ENCODE measurements at regions of chr15 and their contacts with region 1.

Region 1: DNA sequence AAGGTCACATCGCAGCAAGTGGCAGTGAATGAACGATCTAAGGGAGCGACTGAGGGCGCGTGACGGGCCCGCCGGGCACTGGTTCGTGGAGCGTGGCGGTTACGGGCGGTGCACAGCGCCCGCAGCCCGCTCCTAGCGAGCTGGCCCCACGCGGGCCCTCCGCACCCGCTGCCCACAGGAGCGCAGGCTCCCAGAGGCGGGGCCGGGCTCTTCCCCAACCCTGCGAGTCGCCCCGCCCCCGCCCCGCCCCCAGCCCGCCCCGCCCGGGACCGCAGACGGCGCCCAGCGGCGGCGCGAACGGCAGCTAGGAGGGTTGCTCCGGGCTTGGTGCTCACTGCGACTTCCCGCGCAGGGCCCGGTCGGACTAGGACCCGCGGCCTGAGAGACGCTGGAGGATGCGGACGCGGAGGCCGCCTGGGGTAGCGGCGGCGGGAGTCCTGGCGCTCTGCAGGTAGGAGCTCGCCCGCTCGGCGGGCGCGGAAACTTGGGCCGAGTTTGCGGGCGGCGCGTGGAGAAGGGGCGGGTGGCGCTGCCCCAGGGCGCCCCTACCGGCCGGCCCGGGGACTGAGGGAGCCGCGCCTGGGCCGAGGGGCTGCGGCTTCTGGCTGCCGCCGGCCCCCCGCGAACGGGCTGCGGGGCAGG is at the start of gene C15orf39:
- DNase-seq: peak; percentile 74
- H3K4me3 ChIP-seq: peak within 1 kb of the TSS; percentile 100
- H3K27ac ChIP-seq: peak within 1 kb of the TSS; percentile 99
- H3K4me1 ChIP-seq: peaks cover 88% of the 10 kb centered on the region
- H3K27me3 ChIP-seq: no peaks in the 10 kb centered on the region
- CTCF ChIP-seq: peak; percentile 96
- total RNA-seq, gene C15orf39: 15.0 TPM

Region 2: GRCh38 chr15:75042730-75043508 is 158.8 kb before region 1 on chr15:
- intact Hi-C with region 1: loop called (anchors 2 kb)
- DNase-seq: peak; percentile 85
- H3K4me3 ChIP-seq: peak overlapping the region; percentile 49
- H3K27ac ChIP-seq: peak overlapping the region; percentile 97
- H3K4me1 ChIP-seq: peaks cover 64% of the 10 kb centered on the region
- H3K27me3 ChIP-seq: no peaks in the 10 kb centered on the region
- CTCF ChIP-seq: peak; percentile 73

Measured in left ventricle myocardium inferior (tissue), 1 donor.